ENCODE measurements at regions of chr1 and their contacts with region 1.

Region 1: GRCh38 chr1:46603858-46604549 is at the start of gene MKNK1:
- DNase-seq: peak; percentile 98
- H3K4me3 Mint-ChIP-seq: peak within 1 kb of the TSS; percentile 89
- H3K27ac Mint-ChIP-seq: peak within 1 kb of the TSS; percentile 90
- H3K4me1 Mint-ChIP-seq: peaks cover 71% of the 10 kb centered on the region
- H3K27me3 Mint-ChIP-seq: no peaks in the 10 kb centered on the region
- total RNA-seq, gene MKNK1: 58.2 to 63.3 TPM

Region 2: DNA sequence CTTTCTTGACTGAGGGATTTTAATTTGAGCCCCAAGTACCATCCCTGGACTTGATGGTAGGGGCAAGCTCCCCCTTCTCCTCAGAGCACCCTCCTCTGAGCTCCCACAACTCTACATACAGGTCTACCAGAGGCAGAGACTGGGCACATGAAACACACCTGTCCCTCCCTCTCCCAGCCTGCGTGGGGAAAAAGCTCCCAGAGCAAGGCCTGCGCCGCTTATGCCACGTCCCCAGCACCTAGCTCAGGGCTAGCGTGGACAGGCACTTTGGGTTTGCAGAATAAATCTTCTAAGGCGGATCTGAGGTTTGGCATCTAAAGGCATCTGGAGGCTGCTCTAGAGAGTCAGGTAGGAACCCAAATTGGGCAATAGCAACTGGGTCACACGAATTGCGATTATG is 45.0 kb before region 1 on chr1:
- CTCF ChIA-PET with region 1: no interaction called
- POLR2A ChIA-PET with region 1: no interaction called
- DNase-seq: no peak
- H3K4me3 Mint-ChIP-seq: no peak overlapping the region
- H3K27ac Mint-ChIP-seq: no peak overlapping the region
- H3K4me1 Mint-ChIP-seq: peaks cover 7% of the 10 kb centered on the region
- H3K27me3 Mint-ChIP-seq: no peaks in the 10 kb centered on the region

Region 3: DNA sequence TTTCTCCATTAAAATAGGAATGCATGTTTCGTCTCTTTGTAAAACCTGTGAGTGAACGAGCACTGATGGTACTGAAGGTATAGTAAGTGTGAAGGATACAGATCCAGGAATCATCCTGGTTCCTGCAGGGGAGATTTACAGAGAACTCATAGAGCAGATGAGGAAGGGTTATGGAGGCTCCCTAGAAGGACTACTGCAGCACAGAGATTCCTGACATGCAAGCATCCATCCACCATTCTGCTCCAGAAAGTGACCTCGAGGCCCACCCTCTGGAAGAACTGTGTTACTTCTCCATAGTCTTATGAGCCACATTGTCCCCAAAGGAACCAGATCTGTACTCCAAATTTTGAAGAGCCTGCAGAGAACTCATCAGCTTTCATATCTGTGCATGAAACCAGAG is 14.5 kb before region 1 on chr1:
- CTCF ChIA-PET with region 1: interaction called, 25 read pairs
- POLR2A ChIA-PET with region 1: no interaction called
- DNase-seq: no peak
- H3K4me3 Mint-ChIP-seq: no peak overlapping the region
- H3K27ac Mint-ChIP-seq: no peak overlapping the region
- H3K4me1 Mint-ChIP-seq: peaks cover 29% of the 10 kb centered on the region
- H3K27me3 Mint-ChIP-seq: no peaks in the 10 kb centered on the region

Region 4: GRCh38 chr1:46616277-46617107 is 12.5 kb after region 1 on chr1 and contains the start of gene MOB3C:
- CTCF ChIA-PET with region 1: interaction called, 16 read pairs
- POLR2A ChIA-PET with region 1: interaction called, 10 read pairs
- DNase-seq: peak; percentile 66
- H3K4me3 Mint-ChIP-seq: peak within 1 kb of the TSS; percentile 92
- H3K27ac Mint-ChIP-seq: peak within 1 kb of the TSS; percentile 86
- H3K4me1 Mint-ChIP-seq: peaks cover 48% of the 10 kb centered on the region
- H3K27me3 Mint-ChIP-seq: no peaks in the 10 kb centered on the region
- total RNA-seq, gene MOB3C: 19.5 to 21.4 TPM

Region 5: GRCh38 chr1:46637444-46638083 is 33.6 kb after region 1 on chr1:
- CTCF ChIA-PET with region 1: no interaction called
- POLR2A ChIA-PET with region 1: no interaction called
- DNase-seq: no peak
- H3K4me3 Mint-ChIP-seq: no peak overlapping the region
- H3K27ac Mint-ChIP-seq: no peak overlapping the region
- H3K4me1 Mint-ChIP-seq: peaks cover 2% of the 10 kb centered on the region
- H3K27me3 Mint-ChIP-seq: no peaks in the 10 kb centered on the region